Ovary (tissue), 10 donors: ENCODE measurements at regions of chr12 and their contacts with region 1.

Region 1: DNA sequence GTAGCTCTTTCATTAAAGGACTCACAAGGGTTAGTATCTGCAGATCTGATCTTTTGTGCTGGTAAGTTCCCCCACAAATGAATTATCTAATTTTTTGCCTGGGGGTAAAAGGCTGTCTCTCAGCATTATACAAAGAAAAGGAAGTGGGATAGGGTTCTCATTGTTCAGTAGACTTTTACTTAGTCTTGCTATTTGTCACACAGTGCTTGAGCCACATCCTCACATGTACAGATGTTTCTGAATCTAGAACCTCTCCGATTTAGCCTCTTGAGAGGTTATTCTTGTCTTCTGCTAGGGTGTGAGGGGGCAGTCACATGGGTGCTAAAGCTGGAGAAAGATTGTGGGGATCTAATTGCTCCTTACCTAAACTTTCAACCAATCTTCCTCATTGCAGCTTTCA is 93.0 kb downstream of the SLC41A2 start:
- DNase-seq: no peak
- H3K4me3 ChIP-seq: no peak overlapping the region
- H3K27ac ChIP-seq: no peak overlapping the region
- H3K4me1 ChIP-seq: peaks cover 9% of the 10 kb centered on the region
- H3K27me3 ChIP-seq: no peaks in the 10 kb centered on the region
- CTCF ChIP-seq: no peak
- EP300 ChIP-seq: no peak
- POLR2A ChIP-seq: no peak

Region 2: GRCh38 chr12:104456417-104456949 is 408.6 kb before region 1 on chr12 and contains the start of gene CHST11:
- intact Hi-C with region 1: loop called in 1 of 4 experiments (anchors 10 kb)
- DNase-seq: peak; percentile 72 to 84 (median 73)
- H3K4me3 ChIP-seq: peak within 1 kb of the TSS; percentile 72
- H3K27ac ChIP-seq: peak within 1 kb of the TSS; percentile 39 to 57
- H3K4me1 ChIP-seq: no peaks in the 10 kb centered on the region
- H3K27me3 ChIP-seq: no peaks in the 10 kb centered on the region
- CTCF ChIP-seq: peak in 1 of 3 donors; percentile 28
- EP300 ChIP-seq: no peak
- POLR2A ChIP-seq: no peak
- total RNA-seq, gene CHST11: 4.2 to 39.9 (median 20.1) TPM

Region 3: DNA sequence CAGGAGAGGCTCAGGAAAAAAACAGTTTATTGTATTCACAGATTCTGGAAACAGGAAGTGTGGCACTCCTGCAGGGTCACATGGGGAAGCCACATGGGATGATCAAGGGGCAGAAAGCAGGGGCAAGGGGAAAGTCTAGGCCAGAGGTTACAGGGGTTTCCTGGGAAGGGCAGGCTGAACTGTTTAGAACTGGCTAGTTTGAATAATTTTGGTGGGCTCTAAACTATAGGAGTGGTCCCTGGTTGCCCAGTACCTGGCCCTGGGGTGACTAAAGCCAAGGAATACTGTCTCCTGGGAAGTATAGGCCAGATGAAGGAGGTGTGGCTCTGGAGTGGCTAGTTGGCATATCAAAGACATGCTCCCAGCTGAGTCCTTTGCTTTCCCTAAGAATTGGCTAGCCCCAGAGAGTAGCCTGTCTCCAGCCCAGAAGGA is 76.2 kb before region 1 on chr12:
- intact Hi-C with region 1: loop called in 1 of 4 experiments (anchors 10 kb)
- DNase-seq: no peak
- H3K4me3 ChIP-seq: no peak overlapping the region
- H3K27ac ChIP-seq: no peak overlapping the region
- H3K4me1 ChIP-seq: peaks cover 5% of the 10 kb centered on the region
- H3K27me3 ChIP-seq: no peaks in the 10 kb centered on the region
- CTCF ChIP-seq: no peak
- EP300 ChIP-seq: no peak
- POLR2A ChIP-seq: no peak

Region 4: GRCh38 chr12:104852102-104852501 is 13.0 kb before region 1 on chr12:
- intact Hi-C with region 1: no loop called
- DNase-seq: no peak
- H3K4me3 ChIP-seq: no peak overlapping the region
- H3K27ac ChIP-seq: no peak overlapping the region
- H3K4me1 ChIP-seq: no peaks in the 10 kb centered on the region
- H3K27me3 ChIP-seq: no peaks in the 10 kb centered on the region
- CTCF ChIP-seq: no peak
- EP300 ChIP-seq: no peak
- POLR2A ChIP-seq: no peak